T-cell (primary cell): ENCODE measurements at regions of chr20 and their contacts with region 1.

Region 1: GRCh38 chr20:49915378-49916145 is at the start of gene SPATA2:
- DNase-seq: peak; percentile 79 to 97 (median 91)
- ATAC-seq: peak; percentile 85 to 87 (median 86)
- H3K4me3 ChIP-seq: peak within 1 kb of the TSS; percentile 96 to 98
- H3K4me3 Mint-ChIP-seq: peak within 1 kb of the TSS; percentile 94 to 99 (median 98)
- H3K27ac ChIP-seq: peak within 1 kb of the TSS; percentile 99
- H3K27ac Mint-ChIP-seq: peak within 1 kb of the TSS; percentile 99 to 100
- H3K4me1 ChIP-seq: peaks cover 6 to 28% of the 10 kb centered on the region in 2 experiments
- H3K4me1 Mint-ChIP-seq: peaks cover 40 to 43% (median 41%) of the 10 kb centered on the region in 3 donors
- H3K27me3 ChIP-seq: no peaks in the 10 kb centered on the region
- H3K27me3 Mint-ChIP-seq: no peaks in the 10 kb centered on the region
- total RNA-seq, gene SPATA2: 9.6 to 19.4 (median 10.4) TPM

Region 2: DNA sequence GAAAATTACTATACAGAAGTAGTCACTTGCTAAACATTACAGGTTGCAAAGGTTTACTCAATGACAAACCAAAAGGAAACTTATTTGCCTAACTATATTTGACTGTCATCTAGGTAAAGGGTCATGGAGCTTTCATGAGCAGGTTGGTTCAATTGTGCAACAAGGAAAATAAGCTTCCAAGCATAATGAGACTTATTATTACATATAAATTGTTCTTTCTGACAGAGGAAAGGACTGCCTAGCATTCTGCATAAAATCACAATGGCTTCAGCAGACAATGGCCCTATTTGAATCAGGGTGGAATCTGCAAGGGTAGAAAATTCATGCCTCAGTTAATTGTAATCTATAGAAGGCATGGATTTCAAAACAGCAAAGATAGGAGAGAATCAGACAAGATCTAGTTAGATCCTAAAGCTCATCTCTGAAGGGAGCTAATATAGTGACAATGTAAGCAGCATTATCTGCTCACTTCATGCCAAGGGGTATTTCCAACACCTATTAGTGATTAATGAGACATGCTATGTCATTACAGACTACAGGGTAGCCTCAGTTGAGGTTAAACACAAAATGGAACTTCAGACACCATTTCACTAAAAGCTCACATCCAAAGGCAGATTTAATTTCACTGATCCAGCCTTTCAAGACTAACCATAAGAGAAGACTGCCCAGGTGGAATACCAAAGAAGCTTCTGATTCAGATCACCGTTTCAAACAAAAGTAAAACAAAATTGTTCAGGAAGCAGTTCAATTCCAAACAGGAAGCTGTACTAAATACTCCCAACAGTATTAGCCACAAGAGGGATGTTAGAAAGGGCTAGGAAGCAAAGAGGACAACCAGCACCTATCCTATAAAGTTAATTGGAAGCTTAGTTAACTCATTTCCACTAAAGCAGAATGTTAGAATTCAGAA is 735.9 kb before region 1 on chr20:
- CTCF ChIA-PET with region 1: no interaction called
- POLR2A ChIA-PET with region 1: interaction called in 1 of 2 experiments, 14 read pairs
- DNase-seq: no peak
- ATAC-seq: peak in 1 of 4 experiments; percentile 46
- H3K4me3 ChIP-seq: no peak overlapping the region
- H3K4me3 Mint-ChIP-seq: no peak overlapping the region
- H3K27ac ChIP-seq: no peak overlapping the region
- H3K27ac Mint-ChIP-seq: peak overlapping the region in 1 of 2 donors; percentile 25
- H3K4me1 ChIP-seq: peaks cover 18 to 19% of the 10 kb centered on the region in 2 experiments
- H3K4me1 Mint-ChIP-seq: peaks cover 63 to 67% (median 66%) of the 10 kb centered on the region in 3 donors
- H3K27me3 ChIP-seq: no peaks in the 10 kb centered on the region
- H3K27me3 Mint-ChIP-seq: no peaks in the 10 kb centered on the region

Region 3: DNA sequence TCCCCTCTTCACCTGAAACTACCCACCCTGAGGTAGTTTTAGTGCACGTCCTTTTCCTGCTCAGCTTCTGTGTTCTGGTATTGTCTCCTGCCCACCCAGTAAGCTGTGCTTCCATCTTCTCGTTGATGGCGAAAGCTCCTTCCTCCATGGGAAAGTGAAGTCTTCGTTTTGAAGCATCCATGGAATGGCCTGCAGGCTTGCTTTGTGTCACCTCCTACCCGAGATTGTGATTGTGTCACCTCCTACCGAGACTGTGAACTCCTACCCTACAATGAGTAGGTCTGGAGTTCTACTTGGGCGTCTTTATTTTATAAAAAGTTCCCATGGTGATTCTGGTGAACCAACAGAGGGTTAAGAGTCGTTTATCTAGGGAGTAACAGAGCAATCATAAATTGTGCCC is 77.0 kb before region 1 on chr20:
- CTCF ChIA-PET with region 1: no interaction called
- POLR2A ChIA-PET with region 1: no interaction called
- DNase-seq: no peak
- ATAC-seq: no peak
- H3K4me3 ChIP-seq: no peak overlapping the region
- H3K4me3 Mint-ChIP-seq: no peak overlapping the region
- H3K27ac ChIP-seq: no peak overlapping the region
- H3K27ac Mint-ChIP-seq: no peak overlapping the region
- H3K4me1 ChIP-seq: no peaks in the 10 kb centered on the region
- H3K4me1 Mint-ChIP-seq: peaks cover 4 to 7% (median 4%) of the 10 kb centered on the region in 3 donors
- H3K27me3 ChIP-seq: no peaks in the 10 kb centered on the region
- H3K27me3 Mint-ChIP-seq: no peaks in the 10 kb centered on the region

Region 4: DNA sequence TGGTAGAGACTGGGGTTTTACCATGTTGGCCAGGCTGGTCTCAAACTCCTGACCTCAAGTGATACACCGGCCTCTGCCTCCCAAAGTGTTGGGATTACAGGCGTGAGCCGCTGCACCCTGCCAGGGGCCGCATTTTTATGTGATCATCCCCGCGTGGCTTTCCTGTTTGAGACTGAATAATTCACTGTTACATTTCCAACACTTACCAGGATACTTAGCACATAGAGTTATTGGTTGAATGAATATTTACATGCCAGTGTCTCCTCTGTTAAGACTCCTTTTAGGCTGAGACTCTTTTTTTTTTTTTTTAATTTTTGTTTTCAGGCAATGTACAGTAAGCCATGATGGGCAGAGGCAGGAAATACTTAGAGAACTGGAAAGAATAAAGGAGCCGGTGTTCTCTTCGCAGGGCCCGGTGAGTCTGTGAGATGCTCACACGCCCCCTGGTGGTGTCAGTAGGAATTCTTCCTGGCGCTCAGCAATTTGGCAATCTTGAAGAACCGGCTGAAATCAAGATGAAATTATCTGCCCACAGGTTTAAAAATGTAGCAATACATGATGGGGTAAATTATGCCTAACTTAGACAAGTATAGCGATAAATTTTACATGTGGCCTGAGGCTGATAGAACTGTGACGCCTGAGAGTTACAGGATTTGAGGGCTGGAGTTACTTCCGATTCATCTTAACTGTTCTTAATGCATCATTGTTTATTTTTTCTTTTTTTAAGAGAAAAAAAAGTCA is 13.0 kb after region 1 on chr20:
- CTCF ChIA-PET with region 1: interaction called in 1 of 2 experiments, 5 read pairs
- POLR2A ChIA-PET with region 1: interaction called, 9 to 22 read pairs
- DNase-seq: peak; percentile 55 to 89 (median 75)
- ATAC-seq: peak; percentile 92 to 98 (median 94)
- H3K4me3 ChIP-seq: no peak overlapping the region
- H3K4me3 Mint-ChIP-seq: no peak overlapping the region
- H3K27ac ChIP-seq: no peak overlapping the region
- H3K27ac Mint-ChIP-seq: peak overlapping the region; percentile 55 to 76
- H3K4me1 ChIP-seq: peaks cover 2 to 5% of the 10 kb centered on the region in 2 experiments
- H3K4me1 Mint-ChIP-seq: peaks cover 7 to 10% (median 9%) of the 10 kb centered on the region in 3 donors
- H3K27me3 ChIP-seq: peaks cover 0 to 5% of the 10 kb centered on the region in 2 experiments
- H3K27me3 Mint-ChIP-seq: peaks cover 0 to 2% of the 10 kb centered on the region in 2 donors

Region 5: GRCh38 chr20:49936153-49937027 is 20.8 kb after region 1 on chr20 and contains the start of gene RNF114:
- CTCF ChIA-PET with region 1: interaction called in 1 of 2 experiments, 10 read pairs
- POLR2A ChIA-PET with region 1: interaction called, 7 to 9 read pairs
- DNase-seq: peak; percentile 80 to 95 (median 88)
- ATAC-seq: peak; percentile 95 to 98 (median 96)
- H3K4me3 ChIP-seq: peak within 1 kb of the TSS; percentile 99 to 100
- H3K4me3 Mint-ChIP-seq: peak within 1 kb of the TSS; percentile 87 to 97 (median 95)
- H3K27ac ChIP-seq: peak within 1 kb of the TSS; percentile 90
- H3K27ac Mint-ChIP-seq: peak within 1 kb of the TSS; percentile 92 to 94
- H3K4me1 ChIP-seq: peaks cover 16 to 37% of the 10 kb centered on the region in 2 experiments
- H3K4me1 Mint-ChIP-seq: peaks cover 49 to 57% (median 51%) of the 10 kb centered on the region in 3 donors
- H3K27me3 ChIP-seq: no peaks in the 10 kb centered on the region
- H3K27me3 Mint-ChIP-seq: no peaks in the 10 kb centered on the region
- total RNA-seq, gene RNF114: 83.5 to 109 (median 95.7) TPM